B cell (primary cell): ENCODE measurements at regions of chr2 and their contacts with region 1.

Region 1: GRCh38 chr2:55431982-55432627 is 12.4 kb upstream of the CCDC88A start:
- DNase-seq: peak; percentile 45
- ATAC-seq: peak; percentile 24
- H3K4me3 ChIP-seq: no peak overlapping the region
- H3K4me3 Mint-ChIP-seq: no peak overlapping the region
- H3K27ac ChIP-seq: no peak overlapping the region
- H3K27ac Mint-ChIP-seq: no peak overlapping the region
- H3K4me1 ChIP-seq: no peaks in the 10 kb centered on the region
- H3K4me1 Mint-ChIP-seq: no peaks in the 10 kb centered on the region
- H3K27me3 ChIP-seq: no peaks in the 10 kb centered on the region
- H3K27me3 Mint-ChIP-seq: no peaks in the 10 kb centered on the region
- CTCF ChIP-seq: peak; percentile 71

Region 2: GRCh38 chr2:54899576-54900200 is 532.4 kb before region 1 on chr2:
- CTCF ChIA-PET with region 1: no interaction called
- POLR2A ChIA-PET with region 1: no interaction called
- intact Hi-C with region 1: loop called (anchors 5 kb)
- DNase-seq: peak; percentile 27
- ATAC-seq: peak; percentile 36
- H3K4me3 ChIP-seq: no peak overlapping the region
- H3K4me3 Mint-ChIP-seq: no peak overlapping the region
- H3K27ac ChIP-seq: no peak overlapping the region
- H3K27ac Mint-ChIP-seq: no peak overlapping the region
- H3K4me1 ChIP-seq: no peaks in the 10 kb centered on the region
- H3K4me1 Mint-ChIP-seq: no peaks in the 10 kb centered on the region
- H3K27me3 ChIP-seq: no peaks in the 10 kb centered on the region
- H3K27me3 Mint-ChIP-seq: no peaks in the 10 kb centered on the region
- CTCF ChIP-seq: peak; percentile 29

Region 3: DNA sequence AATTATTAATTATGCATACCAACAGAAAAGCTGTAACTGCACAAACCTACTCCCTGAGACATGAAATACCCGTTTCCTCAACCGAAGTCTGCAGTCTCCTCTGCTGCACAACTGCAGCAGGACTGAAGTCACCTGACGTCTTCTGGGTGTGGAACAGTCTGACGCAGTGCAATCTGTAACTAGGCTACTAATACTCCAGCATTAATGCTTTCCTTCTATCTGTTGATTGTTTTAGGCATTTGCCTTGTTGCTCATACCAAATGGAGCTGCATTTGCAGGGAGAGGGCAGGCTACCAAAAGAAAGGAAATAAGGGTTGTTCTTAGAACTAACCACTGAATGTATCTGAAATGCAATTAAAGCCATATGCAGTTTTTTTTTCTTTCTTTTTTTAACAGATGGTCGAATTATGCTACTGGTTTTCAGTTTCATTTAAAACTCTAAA is 421.9 kb before region 1 on chr2:
- CTCF ChIA-PET with region 1: no interaction called
- POLR2A ChIA-PET with region 1: no interaction called
- intact Hi-C with region 1: loop called (anchors 5 kb)
- DNase-seq: peak; percentile 78
- ATAC-seq: peak; percentile 95
- H3K4me3 ChIP-seq: peak overlapping the region; percentile 2 to 48 (median 38)
- H3K4me3 Mint-ChIP-seq: peak overlapping the region; percentile 91
- H3K27ac ChIP-seq: peak overlapping the region; percentile 1 to 73
- H3K27ac Mint-ChIP-seq: peak overlapping the region; percentile 55
- H3K4me1 ChIP-seq: peaks cover 19 to 43% of the 10 kb centered on the region in 2 donors
- H3K4me1 Mint-ChIP-seq: peaks cover 63% of the 10 kb centered on the region
- H3K27me3 ChIP-seq: no peaks in the 10 kb centered on the region
- H3K27me3 Mint-ChIP-seq: no peaks in the 10 kb centered on the region
- CTCF ChIP-seq: no peak

Region 4: GRCh38 chr2:55452879-55453278 is 20.8 kb after region 1 on chr2:
- CTCF ChIA-PET with region 1: no interaction called
- POLR2A ChIA-PET with region 1: no interaction called
- intact Hi-C with region 1: no loop called
- DNase-seq: no peak
- ATAC-seq: no peak
- H3K4me3 ChIP-seq: no peak overlapping the region
- H3K4me3 Mint-ChIP-seq: no peak overlapping the region
- H3K27ac ChIP-seq: no peak overlapping the region
- H3K27ac Mint-ChIP-seq: no peak overlapping the region
- H3K4me1 ChIP-seq: no peaks in the 10 kb centered on the region
- H3K4me1 Mint-ChIP-seq: no peaks in the 10 kb centered on the region
- H3K27me3 ChIP-seq: no peaks in the 10 kb centered on the region
- H3K27me3 Mint-ChIP-seq: no peaks in the 10 kb centered on the region
- CTCF ChIP-seq: no peak

Region 5: GRCh38 chr2:56519806-56520205 is 1087.7 kb after region 1 on chr2:
- CTCF ChIA-PET with region 1: no interaction called
- POLR2A ChIA-PET with region 1: no interaction called
- intact Hi-C with region 1: no loop called
- DNase-seq: no peak
- ATAC-seq: no peak
- H3K4me3 ChIP-seq: no peak overlapping the region
- H3K4me3 Mint-ChIP-seq: no peak overlapping the region
- H3K27ac ChIP-seq: no peak overlapping the region
- H3K27ac Mint-ChIP-seq: no peak overlapping the region
- H3K4me1 ChIP-seq: no peaks in the 10 kb centered on the region
- H3K4me1 Mint-ChIP-seq: no peaks in the 10 kb centered on the region
- H3K27me3 ChIP-seq: no peaks in the 10 kb centered on the region
- H3K27me3 Mint-ChIP-seq: no peaks in the 10 kb centered on the region
- CTCF ChIP-seq: no peak